ENCODE measurements at regions of chr12 and their contacts with region 1.

Region 1: DNA sequence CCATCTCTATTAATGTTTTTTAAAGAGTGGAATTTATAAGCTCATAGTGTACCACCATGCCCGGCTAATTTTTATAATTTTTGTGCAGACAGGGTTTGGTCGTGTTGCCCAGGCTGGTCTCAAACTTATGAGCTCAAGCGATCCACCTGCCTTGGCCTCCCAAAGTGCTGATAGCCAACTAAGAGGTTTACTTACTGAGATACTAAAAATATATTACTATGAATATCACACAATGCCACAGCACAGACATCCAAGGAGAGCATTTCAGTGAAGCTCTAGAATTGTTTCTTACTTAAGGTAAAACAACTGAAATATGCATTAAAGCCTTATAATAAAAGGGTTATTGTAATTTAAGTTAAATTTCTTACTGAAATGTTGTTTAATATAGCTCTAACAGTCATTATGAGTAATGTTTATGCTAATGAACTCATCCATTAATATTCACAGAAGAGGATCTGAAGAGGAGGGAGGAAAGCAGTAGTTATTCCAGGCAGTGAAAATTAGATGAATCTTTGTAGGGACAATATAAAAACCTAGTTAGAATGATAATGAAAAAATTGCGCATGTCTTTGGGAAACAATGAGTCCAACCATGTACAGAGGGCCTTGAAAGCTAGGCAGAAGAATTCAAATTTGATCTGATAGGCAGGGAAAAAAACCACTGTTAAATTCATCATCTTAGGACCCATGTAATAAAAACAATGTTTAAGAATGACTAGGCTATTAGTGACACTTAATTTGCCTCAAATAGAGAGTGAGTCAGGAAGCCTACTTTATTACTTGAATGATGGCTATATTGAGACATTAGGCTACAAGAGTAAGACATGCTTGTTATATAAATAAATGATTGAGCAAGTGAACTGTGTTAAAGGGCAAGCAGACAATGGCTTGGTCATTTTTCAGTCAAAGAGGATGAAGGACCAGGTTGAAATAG is 99.2 kb downstream of the SLC41A2 start:
- DNase-seq: peak; percentile 61
- H3K4me3 ChIP-seq: no peak overlapping the region
- H3K27ac ChIP-seq: no peak overlapping the region
- H3K4me1 ChIP-seq: peaks cover 2% of the 10 kb centered on the region
- H3K27me3 ChIP-seq: no peaks in the 10 kb centered on the region
- CTCF ChIP-seq: no peak

Region 2: GRCh38 chr12:104944252-104944651 is 85.4 kb after region 1 on chr12:
- CTCF ChIA-PET with region 1: no interaction called
- dilution Hi-C with region 1: loop called (anchors 5 kb)
- in situ Hi-C with region 1: no loop called
- intact Hi-C with region 1: no loop called
- DNase-seq: peak; percentile 47
- H3K4me3 ChIP-seq: no peak overlapping the region
- H3K27ac ChIP-seq: no peak overlapping the region
- H3K4me1 ChIP-seq: no peaks in the 10 kb centered on the region
- H3K27me3 ChIP-seq: no peaks in the 10 kb centered on the region
- CTCF ChIP-seq: no peak

Measured in mammary epithelial cell (primary cell).